Prostate gland (tissue), 2 donors: ENCODE measurements at regions of chr1 and their contacts with region 1.

Region 1: GRCh38 chr1:154539507-154540483 is 18.7 kb downstream of the UBE2Q1 start:
- DNase-seq: no peak
- H3K4me3 ChIP-seq: no peak overlapping the region
- H3K27ac ChIP-seq: no peak overlapping the region
- H3K4me1 ChIP-seq: no peaks in the 10 kb centered on the region
- H3K27me3 ChIP-seq: no peaks in the 10 kb centered on the region
- CTCF ChIP-seq: no peak
- POLR2A ChIP-seq: no peak

Region 2: GRCh38 chr1:154485106-154485505 is 54.7 kb before region 1 on chr1:
- intact Hi-C with region 1: loop called (anchors 5 kb)
- DNase-seq: no peak
- H3K4me3 ChIP-seq: no peak overlapping the region
- H3K27ac ChIP-seq: no peak overlapping the region
- H3K4me1 ChIP-seq: no peaks in the 10 kb centered on the region
- H3K27me3 ChIP-seq: no peaks in the 10 kb centered on the region
- CTCF ChIP-seq: no peak
- POLR2A ChIP-seq: no peak

Region 3: DNA sequence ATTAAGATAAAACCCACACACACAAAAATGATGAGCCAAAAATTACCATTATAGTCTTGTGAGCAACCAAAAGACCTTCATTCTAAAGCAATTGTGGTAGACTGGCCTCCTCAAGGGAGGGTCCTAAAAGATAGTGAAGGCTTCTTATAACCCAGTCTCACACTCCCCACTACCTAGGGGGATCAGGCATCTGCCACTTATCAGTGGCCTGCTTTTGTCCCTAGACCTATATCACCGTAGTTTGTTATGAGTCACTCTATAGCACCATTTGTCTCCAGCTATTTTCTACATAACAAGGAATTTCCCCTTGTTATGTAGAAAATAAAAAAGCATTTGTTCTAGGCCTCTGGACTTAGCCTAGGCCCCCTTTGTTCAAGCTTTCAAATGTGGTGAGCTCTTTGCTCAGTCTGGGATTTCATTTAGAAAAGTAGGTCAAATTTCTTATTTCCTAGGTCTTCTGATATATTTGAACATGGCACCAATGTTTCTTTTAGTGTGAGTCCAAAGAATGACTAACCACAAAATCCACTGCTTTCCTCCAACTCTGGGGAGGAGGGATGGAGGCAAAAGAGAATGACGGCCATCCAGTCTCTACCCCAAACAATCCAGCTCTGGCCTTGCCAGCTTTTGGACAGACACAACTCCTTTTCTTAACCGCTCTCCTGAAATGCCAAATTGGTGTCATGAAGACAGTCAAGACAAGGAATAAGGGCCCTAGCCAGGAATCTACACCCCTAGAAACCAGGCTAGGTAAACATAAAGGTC is 59.3 kb after region 1 on chr1:
- intact Hi-C with region 1: no loop called
- DNase-seq: no peak
- H3K4me3 ChIP-seq: no peak overlapping the region
- H3K27ac ChIP-seq: no peak overlapping the region
- H3K4me1 ChIP-seq: no peaks in the 10 kb centered on the region
- H3K27me3 ChIP-seq: no peaks in the 10 kb centered on the region
- CTCF ChIP-seq: no peak
- POLR2A ChIP-seq: no peak